Activated CD8-positive, alpha-beta T cell treated with anti-CD3 and anti-CD28 coated beads, Interleukin-2, amount 10 ng/mL, durations not matched to agents 7 days and 5 days (primary cell): ENCODE measurements at regions of chr4 and their contacts with region 1.

Region 1: GRCh38 chr4:6640292-6641163 is at the start of gene MRFAP1:
- DNase-seq: peak; percentile 95
- ATAC-seq: peak; percentile 76
- H3K4me3 Mint-ChIP-seq: peak within 1 kb of the TSS; percentile 97
- H3K27ac Mint-ChIP-seq: peak within 1 kb of the TSS; percentile 98
- H3K4me1 Mint-ChIP-seq: peaks cover 25% of the 10 kb centered on the region
- H3K27me3 Mint-ChIP-seq: no peaks in the 10 kb centered on the region
- total RNA-seq, gene MRFAP1: 105 TPM

Region 2: DNA sequence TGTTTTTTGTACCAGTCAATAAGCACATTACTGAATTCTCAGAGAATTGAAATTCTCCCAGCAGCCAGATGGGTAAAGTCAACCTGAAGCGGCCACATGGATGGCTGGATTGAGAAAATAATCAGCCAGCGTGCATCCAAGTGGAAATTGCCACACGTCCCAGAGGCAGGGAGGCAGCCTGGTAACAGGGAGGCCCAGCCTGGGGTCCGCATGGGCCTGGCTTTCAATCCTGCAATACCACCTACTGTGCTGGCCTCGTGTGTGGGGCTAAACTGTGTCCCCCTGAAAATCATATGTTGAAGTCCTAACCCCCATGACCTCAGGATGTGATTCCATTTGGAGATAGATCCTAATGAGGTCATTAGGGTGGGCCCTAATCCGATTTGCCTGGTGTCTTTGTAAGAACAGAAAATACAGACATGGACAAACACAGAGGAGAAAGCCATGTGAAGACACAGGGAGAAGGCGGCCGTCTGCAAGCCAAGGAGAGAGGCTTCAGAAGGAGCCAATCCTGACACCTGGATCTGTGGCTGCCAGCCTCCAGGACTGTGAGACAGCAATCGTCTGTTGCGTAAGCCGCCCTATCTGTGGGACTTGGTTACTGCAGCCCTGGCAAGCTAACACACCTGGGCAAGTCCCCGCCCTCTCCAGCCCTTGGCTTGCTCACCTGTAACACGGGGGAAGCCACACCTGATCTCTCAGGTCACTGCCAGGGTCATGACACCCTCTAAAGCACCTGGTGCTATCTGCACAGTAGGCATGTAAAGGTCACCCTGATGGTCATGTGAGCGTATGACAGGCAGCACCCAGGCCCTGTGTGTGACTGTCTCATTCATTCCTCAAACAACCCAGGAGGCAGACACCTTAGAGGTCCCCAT is 530.4 kb before region 1 on chr4:
- CTCF ChIA-PET with region 1: no interaction called
- POLR2A ChIA-PET with region 1: no interaction called
- DNase-seq: no peak
- ATAC-seq: peak; percentile 45
- H3K4me3 Mint-ChIP-seq: no peak overlapping the region
- H3K27ac Mint-ChIP-seq: no peak overlapping the region
- H3K4me1 Mint-ChIP-seq: peaks cover 15% of the 10 kb centered on the region
- H3K27me3 Mint-ChIP-seq: peaks cover 2% of the 10 kb centered on the region

Region 3: DNA sequence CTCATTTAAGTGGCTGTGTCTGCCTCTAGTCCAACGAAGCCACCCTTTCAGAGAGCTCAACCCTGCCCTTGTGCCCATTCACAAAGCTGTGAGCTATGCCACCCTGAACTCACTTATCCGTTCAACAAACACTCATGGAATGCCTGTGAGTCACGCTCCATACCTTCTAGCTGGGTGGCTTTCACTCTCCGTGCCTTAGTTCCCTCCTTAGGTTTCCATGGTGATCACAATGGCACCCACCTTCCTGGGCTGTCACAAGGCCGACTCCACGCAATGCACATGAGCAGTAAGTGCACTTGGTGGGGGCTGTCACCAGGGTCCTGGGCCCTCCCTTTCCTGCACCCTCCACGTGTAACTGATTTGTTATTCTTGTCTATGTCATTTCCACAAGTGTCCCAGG is 130.9 kb before region 1 on chr4:
- CTCF ChIA-PET with region 1: no interaction called
- POLR2A ChIA-PET with region 1: no interaction called
- DNase-seq: no peak
- ATAC-seq: no peak
- H3K4me3 Mint-ChIP-seq: no peak overlapping the region
- H3K27ac Mint-ChIP-seq: no peak overlapping the region
- H3K4me1 Mint-ChIP-seq: no peaks in the 10 kb centered on the region
- H3K27me3 Mint-ChIP-seq: no peaks in the 10 kb centered on the region

Region 4: GRCh38 chr4:6574747-6575502 is 65.6 kb before region 1 on chr4 and contains the start of gene MAN2B2:
- CTCF ChIA-PET with region 1: no interaction called
- POLR2A ChIA-PET with region 1: interaction called, 11 read pairs
- DNase-seq: peak; percentile 82
- ATAC-seq: peak; percentile 95
- H3K4me3 Mint-ChIP-seq: peak within 1 kb of the TSS; percentile 84
- H3K27ac Mint-ChIP-seq: peak within 1 kb of the TSS; percentile 90
- H3K4me1 Mint-ChIP-seq: peaks cover 11% of the 10 kb centered on the region
- H3K27me3 Mint-ChIP-seq: peaks cover 11% of the 10 kb centered on the region
- total RNA-seq, gene MAN2B2: 27.6 to 29.1 TPM

Region 5: GRCh38 chr4:6663596-6664393 is 23.3 kb after region 1 on chr4:
- CTCF ChIA-PET with region 1: no interaction called
- POLR2A ChIA-PET with region 1: interaction called, 16 read pairs
- DNase-seq: no peak
- ATAC-seq: no peak
- H3K4me3 Mint-ChIP-seq: peak overlapping the region; percentile 17
- H3K27ac Mint-ChIP-seq: no peak overlapping the region
- H3K4me1 Mint-ChIP-seq: peaks cover 3% of the 10 kb centered on the region
- H3K27me3 Mint-ChIP-seq: peaks cover 32% of the 10 kb centered on the region

Region 6: DNA sequence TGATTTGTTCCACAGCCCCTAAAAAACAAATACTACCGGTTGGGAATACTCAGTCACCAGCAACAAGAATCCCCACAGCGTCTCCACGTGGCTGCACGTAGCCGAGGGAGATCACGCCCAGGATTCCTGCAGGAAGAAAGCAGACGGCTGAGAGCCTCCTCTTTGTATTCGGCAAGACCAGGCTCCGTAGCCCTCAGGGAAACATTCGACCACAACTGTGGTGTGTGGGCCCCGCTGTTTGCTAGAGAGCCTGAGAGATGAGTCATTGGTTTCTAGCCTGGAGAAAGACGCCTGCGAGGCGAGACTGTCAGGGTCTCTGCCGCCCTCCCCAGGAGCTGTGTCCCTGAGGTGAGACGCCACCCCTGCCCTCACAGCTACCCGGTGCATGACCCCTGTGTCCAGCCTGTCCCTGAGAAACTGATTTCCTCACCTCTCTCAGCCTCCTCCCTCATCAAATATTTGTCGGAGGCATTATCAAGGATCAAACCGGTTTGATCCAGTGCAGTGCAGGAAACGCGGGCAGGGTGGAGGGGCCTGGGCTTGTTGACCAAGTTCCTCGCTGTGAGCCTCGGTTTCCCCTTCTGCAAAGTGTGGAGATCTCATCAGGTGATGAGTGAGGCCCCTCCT is 48.5 kb after region 1 on chr4:
- CTCF ChIA-PET with region 1: no interaction called
- POLR2A ChIA-PET with region 1: interaction called, 26 read pairs
- DNase-seq: peak; percentile 92
- ATAC-seq: peak; percentile 83
- H3K4me3 Mint-ChIP-seq: peak overlapping the region; percentile 81
- H3K27ac Mint-ChIP-seq: peak overlapping the region; percentile 91
- H3K4me1 Mint-ChIP-seq: peaks cover 85% of the 10 kb centered on the region
- H3K27me3 Mint-ChIP-seq: no peaks in the 10 kb centered on the region

Region 7: GRCh38 chr4:6709230-6710114 is 68.9 kb after region 1 on chr4 and contains the start of gene MRFAP1L1:
- CTCF ChIA-PET with region 1: interaction called, 6 read pairs
- POLR2A ChIA-PET with region 1: interaction called, 13 read pairs
- DNase-seq: peak; percentile 98
- ATAC-seq: peak; percentile 84
- H3K4me3 Mint-ChIP-seq: peak within 1 kb of the TSS; percentile 99
- H3K27ac Mint-ChIP-seq: peak within 1 kb of the TSS; percentile 95
- H3K4me1 Mint-ChIP-seq: peaks cover 51% of the 10 kb centered on the region
- H3K27me3 Mint-ChIP-seq: no peaks in the 10 kb centered on the region
- total RNA-seq, gene MRFAP1L1: 65.5 to 67.4 TPM